ENCODE measurements at regions of chr1 and their contacts with region 1.

Region 1: DNA sequence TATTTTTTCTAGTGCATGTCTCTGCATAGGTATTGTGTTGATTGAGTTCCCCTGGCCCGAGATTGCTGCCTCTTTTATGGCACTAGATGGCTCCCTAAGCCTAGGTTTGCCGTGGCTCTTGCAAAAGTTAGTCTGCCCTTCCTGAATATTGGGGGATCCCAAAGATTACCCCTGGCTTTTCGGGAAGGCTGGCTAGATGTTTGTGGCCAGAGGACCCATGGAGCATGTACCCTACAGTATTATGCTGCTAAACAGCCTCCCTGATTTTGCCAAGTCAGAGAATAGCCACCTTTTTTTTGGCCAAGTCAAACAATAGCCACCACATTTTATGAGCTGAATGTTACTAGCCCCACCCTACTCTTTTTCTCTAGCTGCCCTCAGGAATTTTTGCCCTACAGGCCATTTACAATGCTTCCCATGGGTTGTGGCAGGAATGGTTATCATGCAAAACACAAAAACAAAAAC is 343.2 kb downstream of the OLFM3 start:
- DNase-seq: peak; percentile 78
- H3K4me3 ChIP-seq: no peak overlapping the region
- H3K27ac ChIP-seq: no peak overlapping the region
- H3K4me1 ChIP-seq: peaks cover 7% of the 10 kb centered on the region
- H3K27me3 ChIP-seq: no peaks in the 10 kb centered on the region
- CTCF ChIP-seq: peak; percentile 78

Region 2: GRCh38 chr1:101712046-101712445 is 58.5 kb after region 1 on chr1:
- CTCF ChIA-PET with region 1: no interaction called
- POLR2A ChIA-PET with region 1: no interaction called
- intact Hi-C with region 1: loop called (anchors 10 kb)
- DNase-seq: no peak
- H3K4me3 ChIP-seq: no peak overlapping the region
- H3K27ac ChIP-seq: no peak overlapping the region
- H3K4me1 ChIP-seq: no peaks in the 10 kb centered on the region
- H3K27me3 ChIP-seq: no peaks in the 10 kb centered on the region
- CTCF ChIP-seq: no peak

Region 3: DNA sequence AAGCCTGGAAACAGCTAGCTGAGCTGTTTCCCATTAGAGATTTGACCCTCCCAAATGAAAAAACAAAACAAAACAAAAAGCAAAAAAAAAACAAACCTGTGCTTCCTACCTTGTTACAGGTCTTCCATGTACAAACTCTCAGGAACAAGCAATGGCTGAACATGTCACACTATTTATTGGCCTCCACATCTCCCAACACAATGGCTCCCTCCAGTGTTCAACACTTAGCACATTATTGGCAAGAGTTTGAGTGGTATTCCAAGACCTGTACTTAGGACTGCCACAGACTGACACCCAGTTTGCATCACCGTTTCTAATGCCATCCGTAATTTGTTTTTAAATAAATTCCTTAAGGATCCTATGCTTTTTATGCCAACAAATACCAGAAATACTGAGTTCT is 538.2 kb after region 1 on chr1:
- CTCF ChIA-PET with region 1: interaction called, 4 read pairs
- POLR2A ChIA-PET with region 1: no interaction called
- intact Hi-C with region 1: loop called (anchors 2 kb)
- DNase-seq: peak; percentile 88
- H3K4me3 ChIP-seq: no peak overlapping the region
- H3K27ac ChIP-seq: no peak overlapping the region
- H3K4me1 ChIP-seq: peaks cover 29% of the 10 kb centered on the region
- H3K27me3 ChIP-seq: no peaks in the 10 kb centered on the region
- CTCF ChIP-seq: peak; percentile 78

Region 4: DNA sequence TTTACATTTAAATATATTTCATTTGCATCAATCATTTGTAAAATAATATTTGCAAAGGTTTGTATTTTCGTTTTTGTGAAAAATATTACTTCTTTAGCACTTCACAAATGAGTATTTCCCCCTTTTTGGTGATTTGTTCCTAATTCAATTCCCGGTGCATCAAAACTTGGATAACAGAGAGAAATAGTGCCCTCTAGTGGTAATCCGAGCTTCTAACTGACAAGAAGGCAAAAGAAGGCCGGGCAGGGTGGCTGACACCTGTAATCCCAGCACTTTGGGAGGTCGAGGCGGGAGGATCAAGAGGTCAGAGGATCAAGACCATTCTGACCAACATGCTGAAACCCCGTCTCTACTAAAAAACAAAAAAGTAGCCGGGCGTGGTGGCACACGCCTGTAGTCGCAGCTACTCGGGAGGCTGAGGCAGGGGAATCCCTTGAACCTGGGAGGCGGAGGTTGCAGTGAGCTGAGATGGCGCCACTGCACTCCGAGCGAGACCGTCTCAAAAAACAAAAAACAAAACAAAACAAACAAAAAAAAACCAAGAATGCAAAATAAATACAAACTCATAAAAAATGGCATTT is 1317.1 kb after region 1 on chr1:
- CTCF ChIA-PET with region 1: no interaction called
- POLR2A ChIA-PET with region 1: no interaction called
- intact Hi-C with region 1: loop called (anchors 10 kb)
- DNase-seq: peak; percentile 82
- H3K4me3 ChIP-seq: no peak overlapping the region
- H3K27ac ChIP-seq: no peak overlapping the region
- H3K4me1 ChIP-seq: no peaks in the 10 kb centered on the region
- H3K27me3 ChIP-seq: no peaks in the 10 kb centered on the region
- CTCF ChIP-seq: peak; percentile 76